PC-9 (cell line): ENCODE measurements at regions of chr16 and their contacts with region 1.

Region 1: DNA sequence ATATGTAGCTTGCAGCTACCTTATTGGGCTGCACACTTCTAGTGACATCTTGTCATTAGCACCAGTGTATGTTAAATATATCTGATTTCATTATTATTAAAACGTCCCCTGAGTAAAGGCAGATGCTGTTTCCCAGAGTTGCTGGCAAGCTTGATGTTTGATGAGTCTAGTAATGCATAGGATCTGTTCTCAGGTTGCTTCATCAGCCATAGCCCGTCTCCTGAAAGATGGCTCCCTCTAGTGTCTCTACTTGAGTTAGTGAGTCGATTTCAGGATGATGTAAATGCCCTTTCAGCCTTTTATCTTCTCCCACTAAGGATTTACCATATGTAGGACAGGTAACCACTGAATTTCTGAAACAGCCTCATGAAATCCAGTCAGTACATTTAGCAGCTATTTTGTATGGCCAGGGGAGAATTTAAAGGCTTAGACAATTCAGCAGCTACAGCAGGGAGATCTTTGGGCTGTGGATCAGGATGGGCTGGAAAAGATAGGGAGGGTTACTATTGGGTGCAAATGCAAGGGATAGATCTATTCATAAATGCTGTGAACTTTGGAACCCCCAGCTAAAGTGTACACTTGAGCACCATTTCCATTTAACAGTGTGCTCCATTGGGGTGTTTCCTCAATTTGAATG is 376.3 kb downstream of the CNTNAP4 start:
- DNase-seq: peak; percentile 4 to 39
- H3K4me3 ChIP-seq: no peak overlapping the region
- H3K27ac ChIP-seq: no peak overlapping the region
- H3K4me1 ChIP-seq: no peaks in the 10 kb centered on the region
- H3K27me3 ChIP-seq: 0 out of 2 replicates have a peak, but pooled peaks cover under 1% of the 10 kb centered on the region
- CTCF ChIP-seq: peak; percentile 70

Region 2: GRCh38 chr16:75789237-75789636 is 864.3 kb before region 1 on chr16:
- CTCF ChIA-PET with region 1: no interaction called
- POLR2A ChIA-PET with region 1: no interaction called
- intact Hi-C with region 1: loop called (anchors 5 kb)
- DNase-seq: peak in 1 of 2 experiments; percentile 42
- H3K4me3 ChIP-seq: no peak overlapping the region
- H3K27ac ChIP-seq: no peak overlapping the region
- H3K4me1 ChIP-seq: no peaks in the 10 kb centered on the region
- H3K27me3 ChIP-seq: peaks cover 9% of the 10 kb centered on the region; the same call in 1 of the 2 replicates
- CTCF ChIP-seq: peak; percentile 90